AG04450 (cell line): ENCODE measurements at regions of chr11 and their contacts with region 1.

Region 1: DNA sequence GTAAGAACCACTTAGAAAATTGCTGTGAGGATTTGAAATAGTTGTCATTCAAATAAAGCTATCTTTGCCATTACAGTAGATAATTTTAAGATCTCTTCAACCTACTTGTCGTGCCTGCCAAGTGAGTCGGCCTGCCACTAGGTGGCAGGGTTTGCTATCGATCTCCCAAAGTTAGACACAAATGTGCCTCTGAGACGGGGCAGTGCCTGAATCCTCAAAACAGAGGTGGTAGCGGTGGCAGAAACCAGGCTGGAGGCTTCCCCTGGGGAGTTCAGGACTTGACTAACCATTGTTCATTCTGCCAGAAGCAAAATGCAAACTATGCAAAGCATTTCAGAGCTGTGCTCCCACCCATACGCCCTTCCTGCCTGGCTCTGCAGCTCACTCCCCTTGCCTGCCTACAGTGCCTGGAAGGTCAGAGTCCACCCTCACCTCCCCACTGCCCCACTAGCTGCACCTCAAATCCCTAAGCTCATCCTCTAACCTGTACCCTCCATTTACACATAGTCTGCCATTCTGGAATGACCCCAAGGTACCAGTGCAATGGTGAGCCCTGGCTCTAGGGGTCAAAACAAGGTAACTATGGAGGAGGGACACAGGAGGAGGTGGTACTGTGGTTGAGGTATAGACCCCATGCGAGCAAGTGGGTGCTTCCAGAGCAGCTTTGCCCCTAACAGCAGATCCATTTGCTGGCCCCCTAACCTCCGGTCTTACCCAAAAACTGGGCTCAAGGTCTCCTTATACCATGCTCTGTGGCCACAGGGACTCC is 82.1 kb downstream of the C11orf58 start:
- DNase-seq: peak; percentile 29
- H3K4me3 ChIP-seq: no peak overlapping the region
- H3K27ac ChIP-seq: no peak overlapping the region
- H3K27me3 ChIP-seq: peaks cover 12% of the 10 kb centered on the region
- CTCF ChIP-seq: peak; percentile 88

Region 2: DNA sequence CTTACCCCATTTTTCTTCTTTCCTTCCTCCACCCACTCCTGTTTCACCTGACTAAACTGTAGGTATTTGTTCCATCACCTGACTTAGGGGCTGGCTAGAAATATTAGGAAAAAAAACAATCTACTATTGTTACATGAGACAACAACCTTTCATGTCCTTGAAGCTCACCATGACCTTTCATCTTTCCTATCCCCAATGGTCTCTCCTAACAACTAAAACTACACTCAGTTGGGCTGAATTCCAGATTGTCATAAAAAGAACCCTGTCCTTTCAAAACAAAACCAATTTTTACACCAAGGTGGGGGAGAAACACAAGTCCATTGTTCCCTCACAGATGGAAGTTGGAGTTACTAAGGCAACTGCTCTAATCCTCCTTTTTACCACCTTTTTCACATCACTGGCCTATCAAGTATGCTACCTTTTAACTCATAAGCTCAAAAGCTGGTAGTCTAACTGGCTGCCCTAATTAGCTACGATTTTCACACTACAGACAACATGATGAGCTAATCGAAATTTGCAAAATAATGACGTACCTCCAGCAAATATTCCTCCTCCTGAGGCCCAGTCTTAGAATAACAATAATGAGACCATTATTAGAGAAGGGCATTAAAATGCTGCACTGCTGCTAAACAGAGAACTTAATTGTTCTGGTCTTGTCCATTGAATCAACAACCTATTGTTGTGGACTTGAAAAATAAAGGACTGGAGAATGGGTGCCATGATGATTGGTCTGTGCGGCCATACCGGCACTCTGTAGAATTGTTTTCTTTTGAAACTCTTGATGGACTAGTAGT is 417.7 kb before region 1 on chr11:
- CTCF ChIA-PET with region 1: no interaction called
- POLR2A ChIA-PET with region 1: no interaction called
- DNase-seq: no peak
- H3K4me3 ChIP-seq: no peak overlapping the region
- H3K27ac ChIP-seq: no peak overlapping the region
- H3K27me3 ChIP-seq: no peaks in the 10 kb centered on the region
- CTCF ChIP-seq: no peak

Region 3: DNA sequence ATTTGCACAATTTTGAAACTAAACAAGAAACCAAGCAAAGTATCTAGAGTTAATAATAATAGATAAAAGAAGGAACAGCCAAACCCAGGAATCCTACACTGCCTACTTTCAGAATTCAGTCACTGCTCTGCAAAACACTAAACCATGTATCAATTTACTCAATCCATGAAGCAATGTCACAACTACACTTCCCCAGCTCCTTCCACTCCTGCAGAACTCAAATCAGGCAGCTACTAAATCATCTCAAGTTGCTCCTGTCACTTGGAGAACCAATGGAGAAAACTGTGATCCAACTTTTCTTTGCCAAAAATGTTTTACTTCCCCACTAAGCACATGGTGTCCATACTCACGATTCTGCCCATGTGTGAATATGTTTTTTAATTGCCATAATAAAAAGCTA is 106.9 kb before region 1 on chr11:
- CTCF ChIA-PET with region 1: no interaction called
- POLR2A ChIA-PET with region 1: no interaction called
- DNase-seq: no peak
- H3K4me3 ChIP-seq: no peak overlapping the region
- H3K27ac ChIP-seq: no peak overlapping the region
- H3K27me3 ChIP-seq: no peaks in the 10 kb centered on the region
- CTCF ChIP-seq: no peak

Region 4: DNA sequence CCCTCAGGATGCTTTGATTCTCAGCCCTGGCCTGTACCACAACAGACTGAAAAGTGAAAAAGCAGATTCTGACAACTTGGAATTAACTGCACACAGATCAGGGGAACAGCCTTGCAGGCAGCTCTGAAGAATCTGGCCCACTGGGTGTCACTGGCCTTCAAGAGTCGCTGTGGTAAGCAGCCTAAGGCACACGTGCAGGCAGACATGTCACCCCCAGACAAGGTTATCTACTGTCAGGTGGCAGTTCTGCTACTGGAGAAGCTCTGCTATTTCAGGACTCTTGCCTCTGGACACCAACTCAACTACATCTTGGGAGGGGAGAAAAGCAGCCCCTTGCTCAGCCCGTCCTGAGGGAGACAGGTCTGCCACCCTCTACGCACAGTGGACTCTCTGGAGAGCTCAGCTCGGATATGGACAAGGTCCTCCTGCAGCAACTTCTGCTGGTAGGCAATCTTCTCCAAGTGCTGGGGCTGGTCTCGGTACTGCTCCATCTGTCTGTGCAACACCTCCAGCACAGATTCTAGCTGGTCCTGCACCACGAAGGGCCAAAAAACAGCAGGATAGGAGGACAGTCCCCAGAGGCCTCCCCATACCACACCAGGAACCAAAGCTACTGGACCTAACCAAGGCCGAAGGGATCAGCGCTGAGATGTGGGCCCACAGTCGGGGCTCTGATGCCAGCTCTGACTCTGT is 19.1 kb before region 1 on chr11:
- CTCF ChIA-PET with region 1: interaction called, 69 read pairs
- POLR2A ChIA-PET with region 1: no interaction called
- DNase-seq: no peak
- H3K4me3 ChIP-seq: no peak overlapping the region
- H3K27ac ChIP-seq: no peak overlapping the region
- H3K27me3 ChIP-seq: peaks cover 9% of the 10 kb centered on the region
- CTCF ChIP-seq: no peak

Region 5: DNA sequence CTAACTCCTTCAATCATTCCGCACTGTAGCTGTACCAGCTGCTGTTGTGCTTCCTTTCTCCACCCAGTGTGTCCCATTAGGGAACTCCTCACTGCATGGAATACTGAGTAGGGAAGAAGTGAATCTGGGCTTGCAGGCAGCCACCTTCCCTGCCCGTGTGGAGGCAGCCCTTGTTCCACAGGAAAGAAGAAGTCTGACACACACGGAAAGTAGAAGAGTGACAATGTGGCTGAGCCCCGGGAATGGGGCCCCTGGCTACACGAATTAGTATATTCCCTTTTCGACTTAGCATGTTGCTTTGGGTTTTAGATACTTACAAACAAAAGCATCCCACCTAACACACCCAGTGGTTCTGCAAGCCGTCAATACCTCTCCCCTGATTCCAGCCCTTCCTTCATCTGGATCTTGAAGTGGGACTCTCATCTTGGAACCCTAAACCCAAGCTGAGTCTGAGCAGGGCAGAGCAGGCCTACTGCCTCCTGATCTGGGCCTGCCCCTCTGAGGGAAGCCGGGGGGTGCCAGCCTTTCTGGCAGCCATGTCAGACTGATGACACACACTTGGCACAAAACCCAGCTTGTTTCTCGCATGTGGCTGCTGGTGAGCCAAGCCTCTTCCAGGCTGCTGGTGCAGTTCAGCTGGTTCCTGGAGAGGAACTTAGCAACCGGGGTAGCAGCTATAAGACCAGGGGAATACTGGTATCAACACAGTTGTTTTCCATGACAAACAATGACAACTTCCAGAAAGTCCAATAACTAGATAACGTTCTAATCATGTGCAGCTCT is 10.4 kb before region 1 on chr11:
- CTCF ChIA-PET with region 1: interaction called, 69 read pairs
- POLR2A ChIA-PET with region 1: no interaction called
- DNase-seq: no peak
- H3K4me3 ChIP-seq: no peak overlapping the region
- H3K27ac ChIP-seq: no peak overlapping the region
- H3K27me3 ChIP-seq: peaks cover 47% of the 10 kb centered on the region
- CTCF ChIP-seq: no peak

Region 6: GRCh38 chr11:16831316-16832192 is 11.0 kb after region 1 on chr11:
- CTCF ChIA-PET with region 1: interaction called, 29 read pairs
- POLR2A ChIA-PET with region 1: no interaction called
- DNase-seq: no peak
- H3K4me3 ChIP-seq: no peak overlapping the region
- H3K27ac ChIP-seq: no peak overlapping the region
- H3K27me3 ChIP-seq: peaks cover 4% of the 10 kb centered on the region
- CTCF ChIP-seq: no peak

Region 7: DNA sequence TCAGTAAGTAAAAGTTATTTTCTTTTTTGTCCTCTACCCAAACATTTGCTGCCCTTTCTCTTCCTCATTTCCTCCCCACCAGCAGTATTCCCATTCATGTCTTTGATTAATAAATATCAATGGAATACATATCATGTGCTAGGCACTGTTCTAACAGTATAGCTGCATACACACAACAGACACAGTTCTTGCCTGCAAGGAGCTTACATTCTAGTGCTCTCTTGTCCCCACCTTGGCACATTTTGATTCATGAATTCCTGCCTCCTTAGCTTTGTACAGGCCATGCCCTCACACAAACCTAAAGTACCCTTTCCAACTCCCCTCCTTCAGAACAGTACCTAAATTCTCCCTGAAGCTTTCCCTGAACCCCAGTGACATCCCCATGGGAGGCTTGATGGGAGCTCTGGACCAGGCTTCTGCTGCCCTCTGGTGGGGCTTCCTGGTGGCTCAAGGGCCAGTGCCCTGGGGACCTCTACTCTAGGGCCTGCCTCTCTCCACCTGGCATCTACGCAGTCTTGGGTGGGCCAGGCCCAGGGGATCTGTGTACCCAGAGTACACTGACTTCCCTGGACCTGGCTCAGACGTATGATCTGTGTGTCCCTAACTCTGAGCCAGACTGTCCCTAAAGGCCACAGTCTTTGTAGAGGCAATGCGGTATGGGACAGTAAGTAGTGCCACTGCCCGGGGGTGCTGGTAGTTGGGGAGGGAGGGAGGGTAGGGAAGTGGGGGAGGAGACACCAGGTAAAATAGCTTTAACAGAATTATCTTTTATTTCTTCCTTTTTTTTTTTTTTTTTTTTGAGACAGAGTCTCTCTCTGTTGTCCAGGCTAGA is 242.9 kb after region 1 on chr11:
- CTCF ChIA-PET with region 1: interaction called, 66 read pairs
- POLR2A ChIA-PET with region 1: no interaction called
- DNase-seq: no peak
- H3K4me3 ChIP-seq: no peak overlapping the region
- H3K27ac ChIP-seq: no peak overlapping the region
- H3K27me3 ChIP-seq: no peaks in the 10 kb centered on the region
- CTCF ChIP-seq: peak; percentile 77